OCI-LY7 (cell line): ENCODE measurements at regions of chr2 and their contacts with region 1.

Region 1: GRCh38 chr2:216498418-216499413 is at the start of gene RPL37A:
- DNase-seq: peak; percentile 95
- H3K4me3 ChIP-seq: peak within 1 kb of the TSS; percentile 94
- H3K27ac ChIP-seq: peak within 1 kb of the TSS; percentile 67
- H3K4me1 ChIP-seq: peaks cover 47% of the 10 kb centered on the region
- CTCF ChIP-seq: no peak; the same call in 1 of the 2 replicates
- total RNA-seq, gene RPL37A: 4,020 and 4,194 TPM in 2 replicates

Region 2: GRCh38 chr2:216412022-216412999 is 86.4 kb before region 1 on chr2 and contains the start of gene SMARCAL1:
- CTCF ChIA-PET with region 1: no interaction called
- POLR2A ChIA-PET with region 1: interaction called, 16 read pairs
- intact Hi-C with region 1: loop called (anchors 2 kb)
- DNase-seq: peak; percentile 98
- H3K4me3 ChIP-seq: peak within 1 kb of the TSS; percentile 71
- H3K27ac ChIP-seq: peak within 1 kb of the TSS; percentile 29
- H3K4me1 ChIP-seq: peaks cover 20% of the 10 kb centered on the region
- CTCF ChIP-seq: no peak
- total RNA-seq, gene SMARCAL1: 11.0 and 12.2 TPM in 2 replicates

Region 3: DNA sequence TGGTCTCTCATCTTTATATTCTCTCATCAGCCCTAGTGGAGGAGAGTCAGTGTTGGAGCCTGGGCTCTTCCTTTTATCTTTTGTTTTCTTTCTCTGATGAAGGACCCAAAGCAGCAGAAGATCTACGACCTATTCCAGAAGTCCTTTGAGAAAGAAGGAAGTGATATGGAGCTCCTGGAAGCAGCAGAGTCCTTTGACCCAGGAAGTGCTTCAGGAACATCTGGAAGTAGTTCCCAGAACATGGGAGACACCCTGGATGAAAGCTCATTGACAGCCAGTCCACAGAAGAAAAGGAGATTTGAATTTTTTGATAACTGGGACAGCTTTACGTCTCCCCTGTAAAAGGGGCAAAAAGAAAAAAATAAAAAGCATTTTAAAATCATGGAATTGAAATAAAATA is 16.1 kb before region 1 on chr2:
- CTCF ChIA-PET with region 1: no interaction called
- POLR2A ChIA-PET with region 1: interaction called, 10 read pairs
- intact Hi-C with region 1: no loop called
- DNase-seq: no peak
- H3K4me3 ChIP-seq: no peak overlapping the region
- H3K27ac ChIP-seq: no peak overlapping the region
- H3K4me1 ChIP-seq: no peaks in the 10 kb centered on the region
- CTCF ChIP-seq: no peak